ENCODE measurements at regions of chr11 and their contacts with region 1.

Region 1: DNA sequence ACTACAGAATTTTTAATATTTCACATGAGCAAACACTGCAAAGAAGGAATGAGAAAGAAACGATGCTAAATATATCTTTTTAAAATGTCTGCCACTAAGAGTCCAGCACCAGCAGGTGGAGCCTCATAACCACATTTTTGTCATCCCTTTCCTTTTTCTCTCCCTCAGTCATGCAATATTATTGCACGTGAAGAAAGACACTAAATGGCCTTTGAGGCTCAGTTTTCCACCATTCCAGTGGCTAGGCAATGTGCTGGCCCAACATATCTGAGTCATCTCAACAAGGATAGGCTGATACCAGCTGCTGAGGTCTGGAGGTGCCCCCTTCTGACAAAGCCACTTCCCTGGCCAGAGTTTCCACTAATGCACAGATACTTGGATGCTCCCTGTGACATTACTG is 1.8 kb downstream of the ALKBH8 start:
- DNase-seq: peak in 26 of 35 experiments; percentile 2 to 67 (median 26)
- ATAC-seq: no peak
- H3K4me3 ChIP-seq: no peak overlapping the region
- H3K4me3 Mint-ChIP-seq: peak overlapping the region; percentile 23 to 86 (median 34)
- H3K27ac ChIP-seq: no peak overlapping the region
- H3K27ac Mint-ChIP-seq: peak overlapping the region in 1 of 2 donors; percentile 63
- H3K4me1 ChIP-seq: peaks cover 12 to 21% of the 10 kb centered on the region in 2 experiments
- H3K4me1 Mint-ChIP-seq: peaks cover 51 to 61% (median 57%) of the 10 kb centered on the region in 3 donors
- H3K27me3 ChIP-seq: no peaks in the 10 kb centered on the region
- H3K27me3 Mint-ChIP-seq: no peaks in the 10 kb centered on the region

Region 2: DNA sequence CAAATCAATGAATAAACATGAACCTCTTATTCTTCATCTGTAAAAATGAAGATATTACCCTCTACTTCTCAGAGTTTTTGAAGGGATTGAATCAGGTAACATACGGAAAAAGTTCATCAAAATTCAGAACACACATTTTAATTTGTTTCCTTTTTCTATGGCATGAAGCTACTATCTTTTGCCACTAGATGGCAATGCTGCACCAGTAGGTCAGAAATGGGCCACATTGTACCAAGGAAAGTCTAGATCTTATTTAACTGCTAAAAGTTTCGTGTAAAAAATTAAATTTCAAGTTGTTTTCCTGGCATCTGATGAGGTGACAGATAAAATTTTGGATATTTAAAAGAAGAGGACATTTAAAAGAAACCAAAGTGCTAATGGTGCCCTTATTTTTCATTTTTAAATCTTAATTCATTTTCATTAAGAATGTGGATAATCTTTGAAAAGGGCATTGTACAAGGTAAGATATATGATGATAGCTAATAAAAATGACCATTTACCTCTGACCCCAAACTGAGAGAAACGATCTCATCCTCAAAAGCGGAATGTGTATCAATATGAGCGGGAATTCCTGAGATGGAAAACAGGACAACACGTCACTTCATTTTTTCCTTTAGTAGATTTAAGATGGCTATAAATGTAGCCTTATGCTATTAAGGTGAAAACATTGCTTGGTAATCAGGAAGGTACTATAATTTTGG is 14.3 kb before region 1 on chr11:
- CTCF ChIA-PET with region 1: interaction called, 7 to 11 read pairs
- POLR2A ChIA-PET with region 1: no interaction called
- DNase-seq: peak in 18 of 35 experiments; percentile 3 to 67 (median 17)
- ATAC-seq: peak in 1 of 4 experiments; percentile 41
- H3K4me3 ChIP-seq: no peak overlapping the region
- H3K4me3 Mint-ChIP-seq: no peak overlapping the region
- H3K27ac ChIP-seq: no peak overlapping the region
- H3K27ac Mint-ChIP-seq: no peak overlapping the region
- H3K4me1 ChIP-seq: no peaks in the 10 kb centered on the region
- H3K4me1 Mint-ChIP-seq: no peaks in the 10 kb centered on the region
- H3K27me3 ChIP-seq: no peaks in the 10 kb centered on the region
- H3K27me3 Mint-ChIP-seq: no peaks in the 10 kb centered on the region

Measured in T-cell (primary cell).